MCF 10A (cell line): ENCODE measurements at regions of chr18 and their contacts with region 1.

Region 1: GRCh38 chr18:32086861-32087260 is 4.8 kb upstream of the RNF138 start:
- DNase-seq: peak; percentile 23
- H3K4me3 Mint-ChIP-seq: no peak overlapping the region
- H3K27ac Mint-ChIP-seq: no peak overlapping the region
- H3K4me1 Mint-ChIP-seq: peaks cover 8% of the 10 kb centered on the region
- H3K27me3 Mint-ChIP-seq: no peaks in the 10 kb centered on the region
- CTCF ChIP-seq: no peak

Region 2: GRCh38 chr18:32018331-32019250 is 68.3 kb before region 1 on chr18 and contains the start of gene RNF125:
- CTCF ChIA-PET with region 1: no interaction called
- POLR2A ChIA-PET with region 1: interaction called, 47 read pairs
- intact Hi-C with region 1: loop called (anchors 5 kb)
- DNase-seq: peak; percentile 89
- H3K4me3 Mint-ChIP-seq: peak within 1 kb of the TSS; percentile 88
- H3K27ac Mint-ChIP-seq: peak within 1 kb of the TSS; percentile 27
- H3K4me1 Mint-ChIP-seq: peaks cover 11% of the 10 kb centered on the region
- H3K27me3 Mint-ChIP-seq: no peaks in the 10 kb centered on the region
- CTCF ChIP-seq: no peak
- total RNA-seq, gene RNF125: 3.5 and 6.2 TPM in 2 replicates

Region 3: DNA sequence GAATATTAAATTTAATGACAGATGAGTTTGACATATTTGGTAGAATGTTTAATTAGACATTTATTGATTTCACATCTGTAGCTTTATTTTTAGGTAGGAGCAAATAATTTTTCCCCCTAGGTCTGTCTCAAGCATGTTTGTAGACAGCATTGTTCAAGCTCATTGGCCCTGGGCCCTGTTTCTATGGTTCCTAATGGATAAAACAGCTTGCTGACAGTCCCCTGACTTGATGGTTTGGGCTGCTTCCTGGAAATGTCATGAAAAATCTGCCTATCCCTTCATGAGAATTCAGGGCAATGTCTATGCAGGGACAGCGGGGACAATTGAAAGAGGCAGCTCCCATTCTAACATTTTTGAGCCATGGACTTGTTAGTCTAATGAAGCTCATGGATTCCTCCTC is 88.4 kb after region 1 on chr18:
- CTCF ChIA-PET with region 1: no interaction called
- POLR2A ChIA-PET with region 1: no interaction called
- intact Hi-C with region 1: no loop called
- DNase-seq: no peak
- H3K4me3 Mint-ChIP-seq: no peak overlapping the region
- H3K27ac Mint-ChIP-seq: no peak overlapping the region
- H3K4me1 Mint-ChIP-seq: no peaks in the 10 kb centered on the region
- H3K27me3 Mint-ChIP-seq: no peaks in the 10 kb centered on the region
- CTCF ChIP-seq: no peak